Activated naive CD4-positive, alpha-beta T cell treated with anti-CD3 and anti-CD28 coated beads for 36 hours (primary cell): ENCODE measurements at regions of chr12 and their contacts with region 1.

Region 1: GRCh38 chr12:1939801-1940607 is 21.6 kb upstream of the CACNA2D4 start:
- DNase-seq: peak; percentile 95
- H3K4me3 Mint-ChIP-seq: no peak overlapping the region
- H3K27ac Mint-ChIP-seq: no peak overlapping the region
- H3K4me1 Mint-ChIP-seq: no peaks in the 10 kb centered on the region
- H3K27me3 Mint-ChIP-seq: no peaks in the 10 kb centered on the region

Region 2: GRCh38 chr12:1644534-1645438 is 295.2 kb before region 1 on chr12:
- CTCF ChIA-PET with region 1: interaction called, 16 read pairs
- intact Hi-C with region 1: no loop called
- DNase-seq: no peak
- H3K4me3 Mint-ChIP-seq: no peak overlapping the region
- H3K27ac Mint-ChIP-seq: no peak overlapping the region
- H3K4me1 Mint-ChIP-seq: peaks cover 2% of the 10 kb centered on the region
- H3K27me3 Mint-ChIP-seq: peaks cover 2% of the 10 kb centered on the region

Region 3: DNA sequence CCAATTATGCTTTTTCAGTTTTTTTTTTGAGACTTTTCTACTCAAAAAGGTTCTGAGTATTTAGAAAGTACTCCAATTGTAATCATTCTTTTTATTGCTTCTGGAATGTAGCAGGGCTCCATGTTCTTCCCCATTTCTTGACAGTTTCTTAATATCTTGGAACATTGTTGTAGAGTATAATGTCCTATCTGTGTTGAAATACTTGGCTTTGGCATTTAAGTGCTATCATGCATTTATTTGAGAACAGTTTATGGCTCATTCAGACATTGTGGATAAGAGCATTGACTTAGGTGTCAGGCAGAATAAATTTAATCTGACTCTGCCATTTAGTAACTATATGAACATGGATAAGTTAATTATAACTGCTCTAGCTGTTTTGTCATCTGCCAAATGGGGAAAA is 220.9 kb before region 1 on chr12:
- CTCF ChIA-PET with region 1: no interaction called
- intact Hi-C with region 1: no loop called
- DNase-seq: no peak
- H3K4me3 Mint-ChIP-seq: no peak overlapping the region
- H3K27ac Mint-ChIP-seq: no peak overlapping the region
- H3K4me1 Mint-ChIP-seq: peaks cover 42% of the 10 kb centered on the region
- H3K27me3 Mint-ChIP-seq: no peaks in the 10 kb centered on the region

Region 4: DNA sequence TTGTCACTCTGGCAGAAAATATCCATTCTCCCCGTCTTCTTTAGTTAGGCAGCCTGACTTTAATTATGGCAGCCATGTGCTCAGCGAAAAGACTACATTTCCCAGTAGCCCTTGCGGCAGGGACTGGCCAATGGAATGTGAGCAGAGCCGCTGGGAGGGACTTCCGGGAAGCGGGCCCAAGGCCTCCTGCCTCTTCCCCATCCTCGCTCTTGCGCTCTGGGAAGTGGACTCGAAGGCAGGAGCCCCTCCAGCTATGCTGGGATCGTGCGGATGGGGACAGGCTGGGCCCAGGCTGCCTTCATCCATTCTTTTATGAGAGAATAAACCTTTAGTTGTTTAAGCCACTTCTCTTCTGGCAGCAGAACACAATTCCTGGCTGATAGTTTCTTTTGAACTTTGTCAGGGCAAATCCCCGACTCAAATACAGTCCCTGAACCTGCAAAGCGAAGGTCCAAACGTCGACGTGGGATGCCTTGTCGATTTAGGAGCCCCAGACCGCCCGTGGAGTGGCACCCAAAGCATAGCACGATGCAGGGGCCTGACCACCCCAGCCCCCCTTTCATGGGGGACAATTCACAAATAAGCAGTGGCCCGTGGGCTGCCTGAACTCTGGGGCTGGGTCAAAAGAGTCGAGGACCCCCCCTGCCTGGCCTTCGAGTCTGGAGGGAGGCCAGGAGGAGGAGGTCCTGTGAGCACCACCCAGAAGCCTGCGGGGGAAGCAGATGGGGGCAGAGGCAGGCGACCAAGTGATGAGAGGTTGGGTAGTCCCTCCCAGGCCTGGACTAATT is 135.3 kb before region 1 on chr12:
- CTCF ChIA-PET with region 1: interaction called, 21 read pairs
- intact Hi-C with region 1: no loop called
- DNase-seq: peak; percentile 95
- H3K4me3 Mint-ChIP-seq: peak overlapping the region; percentile 20
- H3K27ac Mint-ChIP-seq: peak overlapping the region; percentile 74
- H3K4me1 Mint-ChIP-seq: peaks cover 6% of the 10 kb centered on the region
- H3K27me3 Mint-ChIP-seq: no peaks in the 10 kb centered on the region

Region 5: GRCh38 chr12:1916371-1917171 is 23.4 kb before region 1 on chr12:
- CTCF ChIA-PET with region 1: interaction called, 11 read pairs
- intact Hi-C with region 1: no loop called
- DNase-seq: no peak
- H3K4me3 Mint-ChIP-seq: no peak overlapping the region
- H3K27ac Mint-ChIP-seq: no peak overlapping the region
- H3K4me1 Mint-ChIP-seq: peaks cover 15% of the 10 kb centered on the region
- H3K27me3 Mint-ChIP-seq: peaks cover 4% of the 10 kb centered on the region

Region 6: GRCh38 chr12:1956716-1957115 is 16.7 kb after region 1 on chr12:
- CTCF ChIA-PET with region 1: interaction called, 31 read pairs
- intact Hi-C with region 1: no loop called
- DNase-seq: no peak
- H3K4me3 Mint-ChIP-seq: no peak overlapping the region
- H3K27ac Mint-ChIP-seq: no peak overlapping the region
- H3K4me1 Mint-ChIP-seq: no peaks in the 10 kb centered on the region
- H3K27me3 Mint-ChIP-seq: no peaks in the 10 kb centered on the region

Region 7: GRCh38 chr12:2118061-2118460 is 178.1 kb after region 1 on chr12:
- CTCF ChIA-PET with region 1: no interaction called
- intact Hi-C with region 1: no loop called
- DNase-seq: no peak
- H3K4me3 Mint-ChIP-seq: no peak overlapping the region
- H3K27ac Mint-ChIP-seq: no peak overlapping the region
- H3K4me1 Mint-ChIP-seq: no peaks in the 10 kb centered on the region
- H3K27me3 Mint-ChIP-seq: no peaks in the 10 kb centered on the region

Region 8: GRCh38 chr12:2664721-2665577 is 724.9 kb after region 1 on chr12:
- CTCF ChIA-PET with region 1: no interaction called
- intact Hi-C with region 1: no loop called
- DNase-seq: no peak
- H3K4me3 Mint-ChIP-seq: no peak overlapping the region
- H3K27ac Mint-ChIP-seq: no peak overlapping the region
- H3K4me1 Mint-ChIP-seq: no peaks in the 10 kb centered on the region
- H3K27me3 Mint-ChIP-seq: no peaks in the 10 kb centered on the region